Breast epithelium (tissue), 4 donors: ENCODE measurements at regions of chr5 and their contacts with region 1.

Region 1: DNA sequence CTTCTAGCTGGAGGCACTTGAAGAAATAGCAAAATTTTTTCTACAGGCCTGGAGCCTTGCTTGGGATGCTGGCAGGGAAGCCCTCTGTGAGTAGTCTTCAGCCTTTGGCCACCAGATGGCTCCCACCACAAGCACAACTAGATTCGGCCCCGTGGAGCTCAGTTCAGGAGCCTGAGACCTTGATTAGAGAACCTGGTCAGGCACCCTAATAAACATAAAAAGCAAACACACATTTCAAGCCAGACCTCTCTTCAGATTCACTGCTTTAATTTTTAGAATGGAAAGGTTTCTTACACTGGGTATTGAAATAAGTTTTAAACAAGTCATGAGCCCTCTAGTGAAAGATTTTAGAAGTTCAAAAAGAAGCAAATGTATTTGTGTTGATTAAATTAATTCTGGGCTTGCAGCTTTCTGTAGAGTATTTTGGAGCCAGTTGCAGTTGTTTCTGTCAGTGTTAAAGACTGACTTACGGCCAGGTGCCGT is 41.4 kb downstream of the GLRX start:
- DNase-seq: peak; percentile 64 to 79
- H3K4me3 ChIP-seq: no peak overlapping the region
- H3K27ac ChIP-seq: peak overlapping the region; percentile 5 to 32
- H3K4me1 ChIP-seq: no peaks in the 10 kb centered on the region
- H3K27me3 ChIP-seq: no peaks in the 10 kb centered on the region
- CTCF ChIP-seq: peak; percentile 84 to 93 (median 90)
- POLR2A ChIP-seq: no peak

Region 2: GRCh38 chr5:95846554-95847260 is 65.6 kb after region 1 on chr5:
- intact Hi-C with region 1: loop called (anchors 5 kb)
- DNase-seq: no peak
- H3K4me3 ChIP-seq: no peak overlapping the region
- H3K27ac ChIP-seq: no peak overlapping the region
- H3K4me1 ChIP-seq: peaks cover 0 to 6% of the 10 kb centered on the region in 2 donors
- H3K27me3 ChIP-seq: no peaks in the 10 kb centered on the region
- CTCF ChIP-seq: peak; percentile 93 to 94 (median 94)
- POLR2A ChIP-seq: no peak